Pancreas (tissue), 10 donors: ENCODE measurements at regions of chr13 and their contacts with region 1.

Region 1: GRCh38 chr13:79533781-79534400 is 52.9 kb downstream of the NDFIP2 start:
- DNase-seq: no peak
- ATAC-seq: no peak
- H3K4me3 ChIP-seq: no peak overlapping the region
- H3K27ac ChIP-seq: no peak overlapping the region
- H3K4me1 ChIP-seq: no peaks in the 10 kb centered on the region
- H3K27me3 ChIP-seq: no peaks in the 10 kb centered on the region
- CTCF ChIP-seq: no peak

Region 2: GRCh38 chr13:78958006-78958405 is 575.9 kb before region 1 on chr13:
- intact Hi-C with region 1: no loop called
- DNase-seq: no peak
- ATAC-seq: no peak
- H3K4me3 ChIP-seq: no peak overlapping the region
- H3K27ac ChIP-seq: no peak overlapping the region
- H3K4me1 ChIP-seq: no peaks in the 10 kb centered on the region
- H3K27me3 ChIP-seq: no peaks in the 10 kb centered on the region
- CTCF ChIP-seq: no peak

Region 3: DNA sequence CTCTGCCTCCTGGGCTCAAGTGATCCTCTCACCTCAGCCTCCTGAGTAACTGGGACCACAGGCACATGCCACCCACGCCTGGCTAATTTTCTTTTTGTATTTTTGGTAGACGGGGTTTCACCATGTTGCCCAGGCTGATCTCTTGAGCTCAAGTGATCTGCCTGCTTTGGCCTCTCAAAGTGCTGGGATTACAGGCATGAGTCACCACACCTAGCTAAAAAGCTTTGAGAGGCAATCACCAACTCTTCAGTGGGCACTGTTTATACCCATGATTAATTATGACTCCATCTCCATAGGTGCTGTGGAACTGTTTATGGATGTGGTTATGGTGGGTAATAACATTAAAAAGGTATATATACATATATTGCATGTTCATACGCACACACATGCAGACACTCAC is 120.4 kb before region 1 on chr13:
- intact Hi-C with region 1: loop called in 1 of 3 experiments (anchors 10 kb)
- DNase-seq: no peak
- ATAC-seq: no peak
- H3K4me3 ChIP-seq: no peak overlapping the region
- H3K27ac ChIP-seq: no peak overlapping the region
- H3K4me1 ChIP-seq: no peaks in the 10 kb centered on the region
- H3K27me3 ChIP-seq: no peaks in the 10 kb centered on the region
- CTCF ChIP-seq: no peak

Region 4: GRCh38 chr13:79423801-79424642 is 109.9 kb before region 1 on chr13:
- intact Hi-C with region 1: loop called (anchors 2 to 10 kb)
- DNase-seq: no peak
- ATAC-seq: peak; percentile 76 to 88 (median 84)
- H3K4me3 ChIP-seq: no peak overlapping the region
- H3K27ac ChIP-seq: no peak overlapping the region
- H3K4me1 ChIP-seq: no peaks in the 10 kb centered on the region
- H3K27me3 ChIP-seq: no peaks in the 10 kb centered on the region
- CTCF ChIP-seq: peak; percentile 15 to 52 (median 42)

Region 5: DNA sequence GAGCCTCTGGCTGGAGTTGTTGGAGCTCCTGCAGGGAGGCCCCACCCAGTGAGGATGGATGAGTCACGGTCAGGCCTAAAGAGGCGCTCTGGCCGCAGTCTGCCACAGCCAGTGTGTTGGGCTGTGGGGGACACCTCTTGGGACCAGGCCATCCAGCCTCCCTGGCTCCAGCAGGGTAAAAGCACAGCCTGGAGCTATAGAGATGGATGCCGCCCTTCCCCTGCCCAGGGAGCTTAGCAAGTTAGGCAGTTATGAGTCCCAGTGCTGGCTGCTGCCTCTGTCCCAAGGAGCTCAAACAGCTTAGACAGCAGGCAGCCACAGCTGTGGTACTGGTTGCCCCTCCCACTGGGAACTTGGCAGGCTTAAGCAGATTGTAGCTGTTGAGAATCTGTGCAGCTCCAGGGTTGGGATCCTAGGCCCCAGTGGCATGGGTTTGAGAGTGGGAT is 48.0 kb after region 1 on chr13:
- intact Hi-C with region 1: no loop called
- DNase-seq: peak in 1 of 6 donors; percentile 33
- ATAC-seq: no peak
- H3K4me3 ChIP-seq: no peak overlapping the region
- H3K27ac ChIP-seq: no peak overlapping the region
- H3K4me1 ChIP-seq: no peaks in the 10 kb centered on the region
- H3K27me3 ChIP-seq: no peaks in the 10 kb centered on the region
- CTCF ChIP-seq: no peak

Region 6: DNA sequence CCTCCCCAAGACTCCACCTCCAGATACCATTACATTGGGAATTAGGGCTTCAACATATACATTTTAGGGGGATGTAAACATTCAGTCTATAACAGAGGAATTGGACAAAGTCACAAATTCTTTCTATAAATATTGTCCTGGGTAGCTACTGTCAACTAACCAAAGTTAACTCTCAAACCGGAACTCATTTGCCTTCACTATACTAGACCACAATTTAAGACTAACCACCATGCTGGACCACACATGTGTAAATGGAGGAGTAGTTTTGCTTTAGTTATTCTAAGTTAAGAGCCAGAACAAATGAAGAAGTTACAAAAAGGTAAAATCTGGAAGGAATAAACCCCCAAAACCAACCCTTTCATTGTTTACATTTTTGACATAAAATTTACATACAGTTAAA is 169.9 kb after region 1 on chr13:
- intact Hi-C with region 1: no loop called
- DNase-seq: no peak
- ATAC-seq: no peak
- H3K4me3 ChIP-seq: no peak overlapping the region
- H3K27ac ChIP-seq: no peak overlapping the region
- H3K4me1 ChIP-seq: no peaks in the 10 kb centered on the region
- H3K27me3 ChIP-seq: no peaks in the 10 kb centered on the region
- CTCF ChIP-seq: no peak